Activated CD8-positive, alpha-beta memory T cell treated with anti-CD3 and anti-CD28 coated beads, Interleukin-2, amount 10 ng/mL, durations not matched to agents 7 days and 5 days (primary cell): ENCODE measurements at regions of chr9 and their contacts with region 1.

Region 1: DNA sequence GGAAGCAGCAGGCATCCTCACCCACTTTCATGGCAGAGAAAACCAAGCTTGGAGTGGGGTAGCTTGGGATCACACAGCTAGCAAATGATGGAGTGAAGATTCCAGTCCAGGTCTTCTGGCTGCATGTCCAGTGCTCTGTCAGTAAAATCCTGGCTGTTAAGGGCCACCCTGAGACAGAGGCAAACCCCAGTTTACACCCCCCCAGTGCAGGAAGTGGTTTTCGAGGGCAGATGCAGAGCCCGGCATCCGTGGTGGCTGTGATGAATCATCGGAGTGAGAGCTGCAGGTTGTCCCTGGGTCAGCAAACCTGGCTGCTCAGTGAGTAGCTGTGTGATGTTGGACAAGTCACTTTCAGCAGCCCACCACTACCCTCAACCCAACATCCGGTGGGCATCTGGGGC is 115.4 kb downstream of the RGS3 start:
- DNase-seq: peak; percentile 97
- ATAC-seq: peak; percentile 78
- H3K4me3 Mint-ChIP-seq: peak overlapping the region; percentile 65
- H3K27ac Mint-ChIP-seq: peak overlapping the region; percentile 95
- H3K4me1 Mint-ChIP-seq: peaks cover 65% of the 10 kb centered on the region
- H3K27me3 Mint-ChIP-seq: no peaks in the 10 kb centered on the region

Region 2: GRCh38 chr9:113410207-113410864 is 168.5 kb before region 1 on chr9 and contains the starts of genes C9orf43 and POLE3:
- CTCF ChIA-PET with region 1: interaction called, 10 read pairs
- DNase-seq: peak; percentile 96
- ATAC-seq: peak; percentile 94
- H3K4me3 Mint-ChIP-seq: peak within 1 kb of the TSS; percentile 92
- H3K27ac Mint-ChIP-seq: peak within 1 kb of the TSS; percentile 99
- H3K4me1 Mint-ChIP-seq: peaks cover 37% of the 10 kb centered on the region
- H3K27me3 Mint-ChIP-seq: no peaks in the 10 kb centered on the region
- total RNA-seq, gene C9orf43: 0.16 to 0.41 TPM
- total RNA-seq, gene POLE3: 55.0 to 72.7 TPM

Region 3: GRCh38 chr9:113454914-113455761 is 123.7 kb before region 1 on chr9:
- CTCF ChIA-PET with region 1: interaction called, 14 read pairs
- DNase-seq: no peak
- ATAC-seq: peak; percentile 36
- H3K4me3 Mint-ChIP-seq: no peak overlapping the region
- H3K27ac Mint-ChIP-seq: no peak overlapping the region
- H3K4me1 Mint-ChIP-seq: peaks cover 10% of the 10 kb centered on the region
- H3K27me3 Mint-ChIP-seq: no peaks in the 10 kb centered on the region

Region 4: DNA sequence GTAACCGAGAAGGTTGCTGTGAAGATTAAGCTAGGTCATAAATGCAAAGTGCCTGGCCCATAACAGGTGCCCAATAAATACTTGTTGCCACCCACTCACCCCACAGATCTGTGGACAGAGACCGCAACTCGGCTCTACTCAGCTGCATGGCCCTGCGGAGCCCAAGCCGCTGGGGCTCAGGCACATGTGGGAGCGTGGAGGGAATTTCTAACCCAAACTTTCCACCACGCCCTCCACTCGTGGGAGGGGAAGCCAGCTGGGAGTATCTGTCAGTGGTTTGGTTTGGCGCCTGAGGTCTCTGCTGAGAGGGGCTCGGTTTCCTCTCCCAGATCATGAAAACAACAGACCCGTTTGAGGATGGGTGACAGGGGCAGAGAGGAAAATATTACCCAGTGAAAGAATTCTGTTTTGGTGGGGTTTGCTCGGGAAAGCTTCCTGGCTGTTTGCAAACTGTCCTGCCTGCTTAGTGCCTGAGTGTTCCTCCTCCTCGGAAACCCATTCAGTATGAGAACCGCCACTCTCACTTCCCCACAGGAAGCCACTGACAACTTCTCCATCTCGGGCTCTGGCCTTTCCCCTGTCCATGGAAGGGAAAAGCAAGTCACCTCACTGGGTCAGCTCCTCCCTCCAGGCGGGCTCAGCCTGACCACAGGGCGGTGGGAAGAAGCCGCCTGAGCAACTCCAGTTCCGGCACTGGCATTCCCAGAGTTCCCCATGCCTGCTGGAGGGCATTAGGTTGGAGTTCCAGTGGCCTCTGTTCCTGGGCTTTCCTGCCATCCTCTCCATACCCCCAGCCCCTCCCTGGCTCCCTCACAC is 55.3 kb before region 1 on chr9:
- CTCF ChIA-PET with region 1: interaction called, 105 read pairs
- DNase-seq: peak; percentile 74
- ATAC-seq: peak; percentile 47
- H3K4me3 Mint-ChIP-seq: peak overlapping the region; percentile 38
- H3K27ac Mint-ChIP-seq: peak overlapping the region; percentile 65
- H3K4me1 Mint-ChIP-seq: peaks cover 66% of the 10 kb centered on the region
- H3K27me3 Mint-ChIP-seq: no peaks in the 10 kb centered on the region